B cell (primary cell): ENCODE measurements at regions of chr6 and their contacts with region 1.

Region 1: GRCh38 chr6:31143148-31143547 is 4.3 kb upstream of the PSORS1C2 start:
- DNase-seq: no peak
- ATAC-seq: no peak
- H3K4me3 ChIP-seq: no peak overlapping the region
- H3K4me3 Mint-ChIP-seq: no peak overlapping the region
- H3K27ac ChIP-seq: no peak overlapping the region
- H3K27ac Mint-ChIP-seq: no peak overlapping the region
- H3K4me1 ChIP-seq: no peaks in the 10 kb centered on the region
- H3K4me1 Mint-ChIP-seq: peaks cover 2% of the 10 kb centered on the region
- H3K27me3 ChIP-seq: no peaks in the 10 kb centered on the region
- H3K27me3 Mint-ChIP-seq: no peaks in the 10 kb centered on the region
- CTCF ChIP-seq: no peak

Region 2: GRCh38 chr6:31186052-31186734 is 43.0 kb after region 1 on chr6:
- CTCF ChIA-PET with region 1: interaction called, 133 read pairs
- POLR2A ChIA-PET with region 1: no interaction called
- intact Hi-C with region 1: no loop called
- DNase-seq: peak; percentile 51
- ATAC-seq: no peak
- H3K4me3 ChIP-seq: peak overlapping the region in 1 of 5 experiments; percentile 26
- H3K4me3 Mint-ChIP-seq: peak overlapping the region; percentile 66
- H3K27ac ChIP-seq: peak overlapping the region; percentile 41 to 77
- H3K27ac Mint-ChIP-seq: peak overlapping the region; percentile 99
- H3K4me1 ChIP-seq: peaks cover 6 to 15% of the 10 kb centered on the region in 2 donors
- H3K4me1 Mint-ChIP-seq: peaks cover 19% of the 10 kb centered on the region
- H3K27me3 ChIP-seq: no peaks in the 10 kb centered on the region
- H3K27me3 Mint-ChIP-seq: no peaks in the 10 kb centered on the region
- CTCF ChIP-seq: no peak